Astrocyte of the cerebellum (primary cell): ENCODE measurements at regions of chr15 and their contacts with region 1.

Region 1: DNA sequence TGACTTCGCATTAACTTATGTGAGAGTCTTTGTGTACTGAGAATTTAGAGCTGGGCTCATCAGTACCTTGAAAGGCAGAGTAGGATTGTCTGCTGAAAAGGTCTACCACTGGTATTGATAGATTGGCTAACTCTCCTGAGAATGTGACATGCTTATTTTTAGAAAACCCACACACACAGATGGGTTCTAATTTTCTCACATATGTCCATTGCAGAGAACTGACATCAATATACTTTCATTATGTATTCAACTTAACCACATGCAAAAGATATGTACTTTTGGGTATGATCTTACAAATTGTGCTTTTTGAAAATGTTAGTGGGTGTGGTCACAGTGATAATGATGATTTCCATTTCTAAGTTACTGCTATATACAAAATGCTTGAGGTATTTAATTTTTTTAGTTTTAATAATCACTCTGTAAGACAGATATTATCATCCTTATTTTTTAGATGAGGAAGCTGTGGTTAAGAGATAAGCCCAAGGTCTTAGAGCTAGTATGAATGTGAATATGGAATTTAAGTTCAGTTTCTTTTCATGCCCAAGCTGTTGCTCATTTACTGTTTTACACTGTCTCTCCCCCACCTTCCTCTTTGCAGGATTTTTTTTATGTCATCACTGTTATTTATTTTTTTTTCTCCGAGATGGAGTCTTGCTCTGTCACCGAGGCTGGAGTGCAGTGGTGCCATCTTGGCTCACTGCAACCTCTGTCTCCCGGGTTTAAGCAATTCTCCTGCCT is 22.3 kb downstream of the MAP2K5 start:
- DNase-seq: no peak
- H3K4me3 ChIP-seq: no peak overlapping the region
- CTCF ChIP-seq: no peak

Region 2: DNA sequence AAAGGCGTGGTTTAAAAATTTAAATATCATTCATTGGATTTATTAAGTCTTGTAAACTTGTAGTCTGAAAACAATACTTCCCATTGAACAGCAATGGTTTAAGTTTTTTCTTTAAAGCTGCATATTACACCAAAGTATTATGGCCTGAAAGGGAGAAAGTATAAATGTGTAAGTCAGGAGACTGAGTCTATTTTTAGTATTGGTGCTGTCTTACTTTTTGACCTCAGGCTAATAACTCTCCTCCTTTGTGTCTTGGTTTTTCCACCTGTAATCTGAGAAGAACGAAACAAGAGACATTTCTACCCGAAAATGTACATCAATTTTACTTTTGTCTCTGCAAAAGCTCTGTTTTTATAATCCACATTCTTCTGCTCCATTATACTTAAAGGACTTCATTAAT is 36.3 kb before region 1 on chr15:
- in situ Hi-C with region 1: loop called (anchors 5 kb)
- DNase-seq: no peak
- H3K4me3 ChIP-seq: no peak overlapping the region
- CTCF ChIP-seq: no peak